ENCODE measurements at regions of chr2 and their contacts with region 1.

Region 1: DNA sequence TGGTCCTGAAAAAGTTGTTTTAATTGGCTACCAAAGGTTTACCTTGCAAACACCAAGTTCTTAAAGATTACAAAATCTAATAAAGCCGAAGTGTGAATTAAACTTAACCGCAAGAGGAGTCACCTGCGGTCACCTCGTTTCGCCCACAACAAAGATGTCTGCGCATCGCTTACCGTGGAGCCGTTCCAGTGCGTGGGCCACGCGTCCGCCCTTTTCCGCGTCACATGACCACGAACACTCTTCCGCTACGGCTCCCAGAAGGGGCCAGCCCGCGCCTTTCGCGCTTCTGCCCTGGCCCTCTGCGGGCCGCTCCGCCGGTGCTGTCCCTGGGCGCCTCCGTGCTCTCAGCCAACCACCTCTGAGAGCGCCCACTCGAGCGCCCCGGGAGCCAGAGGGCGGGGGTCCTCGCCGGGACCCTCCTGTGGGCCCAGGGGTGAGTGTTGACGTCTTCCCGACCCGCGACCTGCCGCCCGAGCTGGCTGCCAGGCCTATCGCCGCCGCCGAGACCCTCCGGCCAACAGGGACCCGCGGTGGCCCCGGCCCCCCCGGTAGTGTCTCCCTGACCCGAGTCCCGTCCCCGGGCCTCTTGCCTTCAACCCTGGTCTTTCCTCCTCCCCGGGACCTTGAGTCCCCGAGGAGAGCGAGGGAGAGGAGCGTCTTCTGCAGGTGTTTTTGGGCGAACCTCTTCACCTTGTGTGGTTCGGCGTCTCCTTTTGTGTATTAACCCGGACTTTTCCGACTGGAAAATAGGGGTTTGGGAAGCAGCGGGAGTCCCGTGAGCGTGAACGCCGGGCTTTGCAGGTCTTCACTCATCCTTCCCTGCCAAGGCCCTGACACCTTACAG is at the start of gene MFF:
- DNase-seq: peak; percentile 79
- ATAC-seq: peak; percentile 97
- H3K4me3 ChIP-seq: peak within 1 kb of the TSS; percentile 90
- H3K27ac ChIP-seq: peak within 1 kb of the TSS; percentile 79
- H3K4me1 ChIP-seq: no peaks in the 10 kb centered on the region
- H3K27me3 ChIP-seq: no peaks in the 10 kb centered on the region
- CTCF ChIP-seq: peak; percentile 35 to 48 (median 38); a peak in 5 of 6 replicates
- EP300 ChIP-seq: peak; percentile 41 to 63; a peak in 2 of 4 replicates
- POLR2A ChIP-seq: peak; percentile 92
- RAD21 ChIP-seq: peak; percentile 55
- polyA plus RNA-seq, gene MFF: 19.6 to 35.0 TPM

Region 2: DNA sequence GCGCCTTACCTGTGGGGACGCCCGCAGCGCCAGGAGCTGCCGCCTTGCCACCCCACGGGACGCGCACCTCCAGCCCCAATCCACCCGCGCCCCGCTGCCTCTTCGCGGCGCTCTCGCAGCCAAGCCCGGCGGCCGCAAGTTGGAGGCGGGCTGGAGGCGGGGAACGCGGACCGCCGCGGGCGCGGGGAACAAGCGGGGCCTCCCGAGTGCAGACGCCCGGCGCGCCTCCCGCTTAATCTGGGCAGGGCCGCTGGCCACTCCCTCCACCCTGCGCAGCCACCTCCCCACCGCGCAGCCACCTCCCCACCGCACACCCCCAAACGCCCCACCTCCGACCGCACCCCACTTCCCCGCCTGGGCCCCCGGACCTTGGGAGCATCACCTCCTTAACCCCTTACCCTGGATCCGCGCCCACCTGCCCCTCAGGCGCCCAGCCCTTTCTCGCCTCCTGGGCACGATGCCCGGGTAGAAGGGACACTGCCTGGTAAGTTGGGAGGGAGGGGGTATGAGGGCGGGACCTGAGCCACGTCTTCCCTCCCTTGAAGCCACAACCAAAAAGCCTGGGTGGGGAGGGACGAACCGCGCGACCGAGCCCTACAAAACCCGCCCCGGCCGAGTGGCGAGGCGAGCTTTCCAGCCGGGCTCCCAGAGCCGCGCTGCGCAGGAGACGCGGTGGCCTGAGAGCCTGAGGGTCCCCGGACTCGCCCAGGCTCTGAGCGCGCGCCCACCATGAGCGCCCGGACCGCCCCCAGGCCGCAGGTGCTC is 161.0 kb before region 1 on chr2 and contains the starts of genes COL4A3 and COL4A4:
- CTCF ChIA-PET with region 1: no interaction called
- POLR2A ChIA-PET with region 1: no interaction called
- RAD21 ChIA-PET with region 1: no interaction called
- SMC1A ChIA-PET with region 1: no interaction called
- in situ Hi-C with region 1: no loop called
- intact Hi-C with region 1: no loop called
- DNase-seq: no peak
- ATAC-seq: peak; percentile 82
- H3K4me3 ChIP-seq: peak within 1 kb of the TSS; percentile 85
- H3K27ac ChIP-seq: peak within 1 kb of the TSS; percentile 69
- H3K4me1 ChIP-seq: no peaks in the 10 kb centered on the region
- H3K27me3 ChIP-seq: peaks cover 0 to 2% of the 10 kb centered on the region in 2 experiments; a peak in 2 of 4 replicates
- CTCF ChIP-seq: no peak
- EP300 ChIP-seq: no peak
- POLR2A ChIP-seq: peak; percentile 65
- RAD21 ChIP-seq: no peak
- polyA plus RNA-seq, gene COL4A3: 0.68 to 1.3 TPM
- polyA plus RNA-seq, gene COL4A4: 0.42 to 0.48 TPM

Region 3: GRCh38 chr2:227460070-227460485 is 134.9 kb after region 1 on chr2:
- CTCF ChIA-PET with region 1: no interaction called
- POLR2A ChIA-PET with region 1: no interaction called
- RAD21 ChIA-PET with region 1: no interaction called
- SMC1A ChIA-PET with region 1: interaction called, 3 read pairs
- in situ Hi-C with region 1: no loop called
- intact Hi-C with region 1: loop called (anchors 5 kb)
- DNase-seq: no peak
- ATAC-seq: peak; percentile 67
- H3K4me3 ChIP-seq: no peak overlapping the region
- H3K27ac ChIP-seq: peak overlapping the region; percentile 54
- H3K4me1 ChIP-seq: peaks cover 55% of the 10 kb centered on the region
- H3K27me3 ChIP-seq: no peaks in the 10 kb centered on the region
- CTCF ChIP-seq: no peak
- EP300 ChIP-seq: peak; percentile 59 to 65; a peak in 2 of 4 replicates
- POLR2A ChIP-seq: no peak
- RAD21 ChIP-seq: no peak